Body of pancreas (tissue), 4 donors: ENCODE measurements at regions of chr12 and their contacts with region 1.

Region 1: GRCh38 chr12:110937104-110937641 is 16.8 kb upstream of the MYL2 start:
- DNase-seq: peak; percentile 38 to 63 (median 48)
- ATAC-seq: peak; percentile 62
- H3K4me3 ChIP-seq: no peak overlapping the region
- H3K27ac ChIP-seq: no peak overlapping the region
- H3K4me1 ChIP-seq: peaks cover 9% of the 10 kb centered on the region
- H3K27me3 ChIP-seq: no peaks in the 10 kb centered on the region
- CTCF ChIP-seq: peak; percentile 76 to 94 (median 80)
- POLR2A ChIP-seq: no peak

Region 2: GRCh38 chr12:110869026-110869425 is 68.1 kb before region 1 on chr12:
- intact Hi-C with region 1: no loop called
- DNase-seq: peak in 1 of 4 donors; percentile 13
- ATAC-seq: no peak
- H3K4me3 ChIP-seq: no peak overlapping the region
- H3K27ac ChIP-seq: no peak overlapping the region
- H3K4me1 ChIP-seq: no peaks in the 10 kb centered on the region
- H3K27me3 ChIP-seq: no peaks in the 10 kb centered on the region
- CTCF ChIP-seq: no peak
- POLR2A ChIP-seq: no peak

Region 3: GRCh38 chr12:111298582-111299436 is 361.6 kb after region 1 on chr12:
- intact Hi-C with region 1: loop called (anchors 10 kb)
- DNase-seq: peak; percentile 28 to 52 (median 40)
- ATAC-seq: peak; percentile 47
- H3K4me3 ChIP-seq: no peak overlapping the region
- H3K27ac ChIP-seq: no peak overlapping the region
- H3K4me1 ChIP-seq: no peaks in the 10 kb centered on the region
- H3K27me3 ChIP-seq: no peaks in the 10 kb centered on the region
- CTCF ChIP-seq: peak; percentile 54 to 77 (median 66)
- POLR2A ChIP-seq: no peak